Heart right ventricle (tissue), 16 donors: ENCODE measurements at regions of chr22 and their contacts with region 1.

Region 1: DNA sequence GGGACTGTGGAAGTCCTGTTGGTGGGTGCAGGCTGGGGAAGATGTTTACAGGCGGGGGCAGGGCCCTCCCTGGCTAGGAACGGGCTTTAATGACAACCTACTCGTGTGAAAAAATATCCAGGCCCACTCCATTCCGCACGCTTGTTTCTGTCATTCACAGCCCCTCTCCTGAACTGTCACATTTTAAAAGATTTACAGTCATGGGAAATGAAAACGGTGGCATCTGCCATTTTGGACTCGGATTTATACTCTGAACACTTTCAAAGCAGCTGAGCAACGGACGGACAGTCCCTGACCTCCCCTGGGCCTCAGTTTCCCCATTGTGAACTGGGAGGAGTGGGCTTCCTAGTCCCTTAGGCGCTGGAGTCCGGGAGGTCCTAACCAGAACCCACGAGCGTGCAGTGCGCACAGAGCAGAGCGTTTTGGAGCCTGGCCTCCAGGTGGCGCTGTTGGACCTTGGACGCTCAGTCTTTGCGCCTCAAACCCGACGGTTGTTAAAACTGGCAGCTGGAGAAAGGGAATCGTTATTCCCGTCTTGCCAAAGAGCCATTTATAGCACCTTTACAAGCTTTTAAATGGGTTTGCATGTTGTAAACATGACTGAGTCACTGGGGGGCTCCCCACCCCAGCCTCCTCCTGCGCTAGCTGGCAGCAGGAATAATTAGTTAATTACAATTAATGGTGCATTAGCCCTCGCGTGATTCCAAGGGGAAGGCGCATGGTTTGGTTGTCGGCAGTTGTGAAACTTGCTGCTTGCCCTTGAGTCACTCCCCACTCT is 75.3 kb downstream of the FBLN1 start:
- DNase-seq: peak; percentile 71 to 86
- ATAC-seq: peak; percentile 69 to 87 (median 80)
- H3K4me3 ChIP-seq: no peak overlapping the region
- H3K27ac ChIP-seq: no peak overlapping the region
- H3K4me1 ChIP-seq: peaks cover 0 to 6% (median 0%) of the 10 kb centered on the region in 9 donors
- H3K27me3 ChIP-seq: peaks cover 0 to 42% (median 26%) of the 10 kb centered on the region in 7 donors
- CTCF ChIP-seq: peak; percentile 79 to 97 (median 92)

Region 2: DNA sequence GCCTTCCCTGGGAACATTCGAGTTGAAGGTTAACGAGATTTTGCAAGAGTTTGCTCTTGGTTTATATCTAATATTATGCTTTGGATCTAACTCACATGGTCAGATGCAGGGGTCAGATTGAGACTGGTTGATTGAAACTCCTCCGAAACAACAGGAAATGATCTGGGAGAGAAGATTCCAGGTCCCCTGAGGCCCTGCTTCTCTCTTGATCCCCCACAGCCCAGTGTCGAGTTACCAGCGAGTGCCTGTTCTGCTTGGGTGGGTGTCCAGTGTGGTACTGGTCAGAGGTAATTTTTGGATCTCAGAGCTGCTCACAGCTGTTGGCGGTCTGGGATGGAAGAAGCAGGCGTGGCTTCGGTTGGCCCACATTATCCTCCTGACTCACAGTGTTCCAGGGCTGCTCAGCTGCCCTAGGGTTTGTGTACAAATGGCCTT is 66.1 kb before region 1 on chr22:
- intact Hi-C with region 1: no loop called
- DNase-seq: peak; percentile 62 to 73
- ATAC-seq: peak; percentile 79 to 92 (median 86)
- H3K4me3 ChIP-seq: no peak overlapping the region
- H3K27ac ChIP-seq: peak overlapping the region; percentile 35 to 79 (median 58)
- H3K4me1 ChIP-seq: peaks cover 3 to 68% (median 29%) of the 10 kb centered on the region in 9 donors
- H3K27me3 ChIP-seq: peaks cover 0 to under 1% (median 0%) of the 10 kb centered on the region in 7 donors
- CTCF ChIP-seq: no peak

Region 3: GRCh38 chr22:45831394-45831793 is 253.5 kb after region 1 on chr22:
- intact Hi-C with region 1: loop called in 1 of 10 experiments (anchors 10 kb)
- DNase-seq: no peak
- ATAC-seq: no peak
- H3K4me3 ChIP-seq: no peak overlapping the region
- H3K27ac ChIP-seq: no peak overlapping the region
- H3K4me1 ChIP-seq: no peaks in the 10 kb centered on the region
- H3K27me3 ChIP-seq: no peaks in the 10 kb centered on the region
- CTCF ChIP-seq: peak in 6 of 9 donors; percentile 25 to 50 (median 31)

Region 4: DNA sequence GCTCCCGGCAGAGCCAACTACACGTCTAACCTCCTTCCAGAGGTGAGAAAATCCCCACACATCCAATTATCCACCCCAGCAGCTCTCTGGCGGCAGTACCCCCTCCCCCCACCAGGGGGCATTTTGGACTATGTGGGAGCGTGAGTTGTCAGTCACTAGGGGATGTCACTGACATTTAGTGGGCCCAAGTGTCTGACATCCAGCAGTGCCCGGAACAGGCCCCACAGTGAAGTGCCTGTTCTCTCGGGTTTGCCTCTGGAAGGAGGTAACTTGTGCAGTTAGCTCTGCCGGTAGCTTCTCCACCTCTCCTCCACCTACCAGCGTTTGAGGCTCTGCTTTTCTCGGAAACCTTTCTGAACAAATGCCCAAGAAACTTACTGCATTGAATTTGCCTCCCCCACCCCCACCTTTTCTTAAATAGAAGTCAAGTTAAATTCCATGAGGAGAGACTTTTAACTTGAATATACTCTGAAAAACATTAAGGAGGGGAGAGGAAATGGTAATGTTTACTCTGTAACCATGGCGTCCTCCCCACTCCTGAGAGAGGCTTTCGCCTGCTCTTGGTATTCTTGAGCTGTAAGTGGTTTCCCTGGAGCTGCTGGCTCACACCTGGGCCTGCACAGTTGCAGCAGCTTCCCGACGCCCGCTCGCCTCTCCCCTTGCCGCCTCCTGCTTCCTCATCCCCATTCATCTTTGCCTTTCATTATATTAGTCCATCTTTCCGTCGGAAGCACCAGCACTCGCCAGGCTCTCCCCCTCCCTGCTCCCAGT is 286.2 kb after region 1 on chr22:
- intact Hi-C with region 1: loop called in 8 of 10 experiments (anchors 5 to 10 kb)
- DNase-seq: peak; percentile 63 to 75
- ATAC-seq: peak in 7 of 8 donors; percentile 31 to 70 (median 61)
- H3K4me3 ChIP-seq: no peak overlapping the region
- H3K27ac ChIP-seq: no peak overlapping the region
- H3K4me1 ChIP-seq: peaks cover 9 to 28% (median 19%) of the 10 kb centered on the region in 9 donors
- H3K27me3 ChIP-seq: peaks cover 16 to 57% (median 38%) of the 10 kb centered on the region in 7 donors
- CTCF ChIP-seq: peak; percentile 81 to 97 (median 92)

Region 5: GRCh38 chr22:45977003-45977411 is 399.1 kb after region 1 on chr22 and contains the start of gene WNT7B:
- intact Hi-C with region 1: loop called in 1 of 10 experiments (anchors 2 kb)
- DNase-seq: no peak
- ATAC-seq: no peak
- H3K4me3 ChIP-seq: peak within 1 kb of the TSS in 8 of 10 donors; percentile 22 to 47 (median 32)
- H3K27ac ChIP-seq: no peak within 1 kb of the TSS
- H3K4me1 ChIP-seq: peaks cover 7 to 28% (median 22%) of the 10 kb centered on the region in 9 donors
- H3K27me3 ChIP-seq: peaks cover 38 to 67% (median 64%) of the 10 kb centered on the region in 7 donors
- CTCF ChIP-seq: no peak
- total RNA-seq, gene WNT7B: not detected